ENCODE measurements at regions of chr2 and their contacts with region 1.

Region 1: GRCh38 chr2:180980106-180980942 is at the start of gene UBE2E3:
- DNase-seq: peak; percentile 85
- ATAC-seq: peak; percentile 86
- H3K4me3 Mint-ChIP-seq: peak within 1 kb of the TSS; percentile 95
- H3K27ac Mint-ChIP-seq: peak within 1 kb of the TSS; percentile 96
- H3K4me1 Mint-ChIP-seq: peaks cover 39% of the 10 kb centered on the region
- H3K27me3 Mint-ChIP-seq: peaks cover 28% of the 10 kb centered on the region
- total RNA-seq, gene UBE2E3: 35.0 to 49.6 TPM

Region 2: GRCh38 chr2:180933332-180933731 is 47.0 kb before region 1 on chr2:
- CTCF ChIA-PET with region 1: no interaction called
- DNase-seq: no peak
- ATAC-seq: no peak
- H3K4me3 Mint-ChIP-seq: no peak overlapping the region
- H3K27ac Mint-ChIP-seq: no peak overlapping the region
- H3K4me1 Mint-ChIP-seq: peaks cover 11% of the 10 kb centered on the region
- H3K27me3 Mint-ChIP-seq: peaks cover 7% of the 10 kb centered on the region

Region 3: GRCh38 chr2:180991820-180992219 is 11.5 kb after region 1 on chr2:
- CTCF ChIA-PET with region 1: interaction called, 16 read pairs
- DNase-seq: no peak
- ATAC-seq: no peak
- H3K4me3 Mint-ChIP-seq: no peak overlapping the region
- H3K27ac Mint-ChIP-seq: no peak overlapping the region
- H3K4me1 Mint-ChIP-seq: peaks cover 10% of the 10 kb centered on the region
- H3K27me3 Mint-ChIP-seq: no peaks in the 10 kb centered on the region

Region 4: GRCh38 chr2:181026614-181027013 is 46.3 kb after region 1 on chr2:
- CTCF ChIA-PET with region 1: no interaction called
- DNase-seq: no peak
- ATAC-seq: no peak
- H3K4me3 Mint-ChIP-seq: no peak overlapping the region
- H3K27ac Mint-ChIP-seq: no peak overlapping the region
- H3K4me1 Mint-ChIP-seq: peaks cover 1% of the 10 kb centered on the region
- H3K27me3 Mint-ChIP-seq: no peaks in the 10 kb centered on the region

Region 5: DNA sequence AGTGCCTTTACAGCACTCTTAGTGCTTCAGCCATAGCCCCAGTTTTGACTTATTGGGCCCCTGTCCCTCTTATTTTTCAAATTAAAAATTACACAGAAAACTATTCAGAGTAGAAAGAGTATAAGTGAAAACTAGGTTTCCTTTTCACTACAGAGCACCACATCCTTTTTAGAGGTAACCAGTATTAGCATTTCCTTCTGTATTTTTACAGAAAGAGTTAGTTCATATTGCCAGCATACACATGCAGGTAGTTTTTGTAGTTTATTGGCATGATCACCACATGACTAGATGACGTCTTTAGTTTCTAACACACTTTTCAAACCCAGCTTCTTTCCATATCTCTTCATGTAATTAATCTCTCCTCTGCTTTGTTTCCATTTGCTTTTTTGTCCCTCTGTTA is 66.5 kb after region 1 on chr2:
- CTCF ChIA-PET with region 1: interaction called, 11 read pairs
- DNase-seq: no peak
- ATAC-seq: peak; percentile 78
- H3K4me3 Mint-ChIP-seq: no peak overlapping the region
- H3K27ac Mint-ChIP-seq: no peak overlapping the region
- H3K4me1 Mint-ChIP-seq: peaks cover 4% of the 10 kb centered on the region
- H3K27me3 Mint-ChIP-seq: no peaks in the 10 kb centered on the region

Region 6: GRCh38 chr2:181374781-181375675 is 394.7 kb after region 1 on chr2:
- CTCF ChIA-PET with region 1: no interaction called
- DNase-seq: no peak
- ATAC-seq: no peak
- H3K4me3 Mint-ChIP-seq: no peak overlapping the region
- H3K27ac Mint-ChIP-seq: peak overlapping the region; percentile 42
- H3K4me1 Mint-ChIP-seq: peaks cover 51% of the 10 kb centered on the region
- H3K27me3 Mint-ChIP-seq: no peaks in the 10 kb centered on the region

Measured in activated CD8-positive, alpha-beta memory T cell treated with anti-CD3 and anti-CD28 coated beads, Interleukin-2, amount 10 ng/mL, durations not matched to agents 7 days and 5 days (primary cell).